ENCODE measurements at regions of chr2 and their contacts with region 1.

Region 1: DNA sequence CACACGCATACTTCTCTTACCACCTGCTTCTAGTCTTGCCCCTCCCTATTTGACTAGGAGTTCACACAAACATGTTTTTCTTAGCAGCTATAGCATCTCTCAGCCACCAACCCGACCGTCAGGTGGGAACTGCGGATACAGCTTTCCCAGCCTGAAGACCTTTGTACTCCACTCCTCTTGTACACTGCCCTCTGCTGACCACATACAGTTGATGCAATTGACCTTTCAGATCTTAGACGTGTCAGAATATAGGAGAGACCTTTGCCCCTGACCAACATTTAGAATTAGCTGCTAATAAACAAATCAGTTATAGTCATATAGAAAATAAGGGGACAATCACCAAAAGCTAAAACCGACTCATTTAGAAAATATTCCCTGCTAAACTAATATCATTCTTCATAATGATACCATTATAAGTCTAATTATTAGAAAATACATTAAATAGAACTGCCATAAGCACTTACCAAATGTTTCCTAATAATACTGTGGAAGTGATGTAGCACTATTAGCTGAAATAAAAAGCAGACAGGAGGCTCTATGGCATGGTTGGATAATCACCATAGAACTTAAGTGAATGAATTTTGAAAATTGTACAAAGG is 208.4 kb downstream of the RAD51AP2 start:
- DNase-seq: no peak
- ATAC-seq: peak; percentile 60

Region 2: DNA sequence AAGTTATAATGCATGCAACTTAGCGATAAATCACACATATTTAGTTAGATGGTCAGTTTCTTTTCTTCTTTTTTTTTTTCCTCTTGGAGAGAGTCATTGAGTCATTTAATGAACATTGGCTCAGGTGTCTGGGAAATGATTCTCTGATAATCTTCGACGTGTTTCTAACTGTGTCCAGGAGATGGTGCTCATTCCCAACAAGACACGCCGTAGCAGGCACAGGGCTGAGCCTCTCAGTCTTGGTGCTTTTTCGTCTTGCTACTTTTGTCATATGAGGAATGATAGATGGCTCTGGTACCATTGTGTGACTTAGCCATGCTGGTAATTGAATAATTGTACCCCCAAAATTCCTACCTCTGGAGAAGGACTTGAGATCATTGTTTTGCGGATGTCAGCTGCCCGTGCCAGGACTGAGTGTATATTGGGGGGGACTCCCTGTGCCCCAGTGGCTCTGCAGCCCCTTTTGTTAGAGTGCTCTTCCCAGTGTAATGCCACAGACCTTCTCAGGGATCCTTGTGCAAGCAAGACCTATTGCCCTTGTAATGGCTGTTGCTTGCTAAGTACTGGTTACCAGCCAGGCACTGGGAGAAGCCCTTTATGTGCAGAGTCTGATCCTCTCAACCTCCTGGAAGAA is 536.6 kb before region 1 on chr2:
- intact Hi-C with region 1: loop called (anchors 10 kb)
- DNase-seq: no peak
- ATAC-seq: peak; percentile 79